ENCODE measurements at regions of chr3 and their contacts with region 1.

Region 1: DNA sequence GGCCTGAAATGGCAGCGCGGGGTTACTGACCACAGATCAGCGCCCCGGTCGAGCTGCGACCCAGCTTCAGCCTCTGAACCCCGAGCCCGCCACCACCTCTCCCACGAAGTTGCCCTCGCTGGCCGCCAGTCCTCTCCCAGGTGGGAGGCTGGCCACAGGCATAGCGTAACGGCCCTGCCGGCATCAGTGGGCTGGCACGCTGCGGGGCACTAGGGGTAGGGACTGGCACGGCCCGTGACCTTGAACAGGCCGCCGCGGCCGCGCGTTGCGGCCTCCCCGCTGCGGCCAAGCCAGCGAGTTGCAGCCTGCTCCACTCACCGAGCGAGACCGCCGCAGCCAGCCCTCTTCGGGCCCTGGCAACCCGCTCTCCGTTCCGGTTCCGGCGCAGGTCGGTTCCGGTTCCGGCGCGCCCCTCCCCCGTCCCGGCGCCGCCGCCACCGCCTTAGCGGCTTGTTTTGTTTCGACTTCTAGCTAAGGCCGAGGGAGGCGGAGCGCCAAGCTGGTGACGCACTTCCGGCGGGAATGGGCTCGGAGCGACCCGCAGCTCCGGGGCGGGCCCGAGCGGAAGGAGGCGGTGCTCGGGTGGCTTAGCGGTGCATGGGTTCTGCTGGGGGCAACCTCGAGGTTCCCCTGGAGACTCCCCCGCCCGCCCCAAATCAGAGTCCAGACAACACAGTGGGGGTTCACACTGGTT is at the start of gene USP19:
- H3K4me3 ChIP-seq: peak within 1 kb of the TSS; percentile 99
- H3K27ac ChIP-seq: peak within 1 kb of the TSS; percentile 69
- H3K4me1 ChIP-seq: peaks cover 6% of the 10 kb centered on the region; the same call in 1 of the 2 replicates
- CTCF ChIP-seq: 0 out of 2 replicates have a peak, but pooled peaks have one; percentile 36

Region 2: DNA sequence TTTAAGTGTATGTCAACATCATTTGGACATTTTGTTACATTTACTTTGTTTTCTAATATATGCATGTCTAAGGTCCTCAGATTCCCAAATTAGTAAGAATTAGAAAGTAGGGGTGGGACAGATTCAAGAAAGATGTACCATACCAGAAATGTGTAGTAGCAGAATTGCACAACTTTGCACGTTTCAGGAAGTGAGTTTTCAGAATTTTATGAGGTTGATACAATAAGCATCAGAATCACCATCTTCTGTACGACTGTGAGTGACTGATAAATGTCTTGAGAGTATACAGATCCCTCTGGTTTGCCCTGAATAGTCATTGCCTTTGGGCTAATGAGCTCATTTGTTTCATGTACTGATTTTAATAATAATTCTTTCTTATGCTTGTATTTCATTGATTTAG is 192.7 kb before region 1 on chr3:
- CTCF ChIA-PET with region 1: no interaction called
- POLR2A ChIA-PET with region 1: no interaction called
- H3K4me3 ChIP-seq: no peak overlapping the region
- H3K27ac ChIP-seq: no peak overlapping the region
- H3K4me1 ChIP-seq: peaks cover 11% of the 10 kb centered on the region
- CTCF ChIP-seq: no peak

Region 3: DNA sequence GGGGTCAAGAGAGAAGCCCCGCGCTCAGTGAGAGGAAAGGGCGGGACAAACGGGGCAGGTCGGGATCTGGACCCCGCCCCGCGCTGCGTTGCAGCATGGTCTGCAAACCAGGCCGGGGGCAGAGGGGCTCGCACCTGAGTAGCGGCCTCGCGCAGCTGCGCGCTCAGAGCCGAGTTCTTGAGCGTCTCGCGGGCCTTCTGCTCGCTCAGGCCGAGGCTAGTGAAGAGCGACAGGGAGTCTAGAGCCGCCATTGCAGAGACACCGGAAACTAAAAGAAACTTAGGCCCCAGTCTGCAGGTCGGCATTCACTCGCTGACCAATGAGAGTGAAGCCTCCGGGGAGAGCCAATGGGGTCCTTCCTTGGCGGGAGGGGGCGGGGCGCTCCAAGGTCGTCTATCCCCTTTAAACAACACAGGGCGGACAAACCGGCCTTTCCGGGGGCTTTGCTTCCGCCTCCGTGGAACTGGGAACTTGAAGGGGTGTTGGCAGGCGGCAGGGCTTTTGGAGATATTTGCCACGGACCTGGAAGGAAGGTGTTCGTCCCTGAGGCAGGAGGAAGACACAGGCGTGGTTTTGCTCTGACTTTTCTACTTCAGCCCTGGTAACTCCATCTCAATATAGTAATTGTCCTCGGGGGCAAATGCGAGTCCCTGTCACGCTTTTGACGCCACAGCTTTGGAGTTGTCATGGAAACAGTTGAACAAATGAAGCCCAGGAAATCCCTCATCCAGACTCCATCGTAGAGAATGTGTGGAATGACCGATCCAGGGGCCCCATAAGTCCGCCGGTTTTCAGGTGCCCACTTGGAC is 15.9 kb before region 1 on chr3 and contains the start of gene QARS1:
- CTCF ChIA-PET with region 1: no interaction called
- POLR2A ChIA-PET with region 1: interaction called, 26 read pairs
- H3K4me3 ChIP-seq: peak within 1 kb of the TSS; percentile 97
- H3K27ac ChIP-seq: peak within 1 kb of the TSS; percentile 70
- H3K4me1 ChIP-seq: no peaks in the 10 kb centered on the region
- CTCF ChIP-seq: no peak

Region 4: GRCh38 chr3:49133226-49133951 is 12.8 kb after region 1 on chr3:
- CTCF ChIA-PET with region 1: interaction called, 4 read pairs
- POLR2A ChIA-PET with region 1: interaction called, 31 read pairs
- H3K4me3 ChIP-seq: peak overlapping the region; percentile 71
- H3K27ac ChIP-seq: peak overlapping the region; percentile 44; the same call in 1 of the 2 replicates
- H3K4me1 ChIP-seq: no peaks in the 10 kb centered on the region; the same call in 1 of the 2 replicates
- CTCF ChIP-seq: 0 out of 2 replicates have a peak, but pooled peaks have one; percentile 7